ENCODE measurements at regions of chr1 and their contacts with region 1.

Region 1: DNA sequence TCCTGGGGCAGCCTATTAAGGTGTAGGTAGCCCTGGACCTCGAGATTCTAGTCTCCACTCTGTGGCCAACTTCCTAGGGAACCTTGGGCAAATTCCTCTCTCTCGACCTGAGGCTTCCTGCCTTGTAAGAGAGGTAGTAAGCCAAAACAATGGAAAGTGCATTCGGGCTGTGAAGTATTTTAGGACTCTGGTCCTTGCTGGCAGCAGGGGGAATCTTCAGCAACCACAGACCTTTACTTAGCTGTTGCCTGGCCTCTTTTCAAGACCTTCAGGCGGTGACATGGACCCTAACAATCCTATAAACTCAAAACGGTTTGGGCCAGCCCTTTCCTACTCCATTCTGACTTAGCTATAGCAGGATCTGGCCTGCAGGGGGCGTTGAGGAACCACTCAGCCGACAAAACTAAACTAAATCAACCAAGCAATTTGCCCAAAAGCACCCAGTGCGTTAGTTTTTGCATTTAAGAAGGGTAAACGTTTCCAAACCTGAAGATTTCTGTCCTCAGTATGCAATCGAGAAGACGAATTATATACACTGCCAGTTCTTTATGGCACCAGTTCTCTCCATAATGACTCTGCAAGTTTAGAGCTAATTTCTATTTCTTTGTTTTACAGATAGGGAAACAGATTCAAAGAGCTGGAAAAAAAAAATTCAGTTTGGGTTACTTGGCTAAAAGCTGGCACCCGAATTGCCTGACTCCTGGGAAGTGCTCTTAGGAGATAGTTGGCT is 10.9 kb upstream of the SESN2 start:
- DNase-seq: peak; percentile 91
- ATAC-seq: peak; percentile 16
- H3K4me3 Mint-ChIP-seq: peak overlapping the region; percentile 35
- H3K27ac Mint-ChIP-seq: peak overlapping the region; percentile 94
- H3K4me1 Mint-ChIP-seq: peaks cover 58% of the 10 kb centered on the region
- H3K27me3 Mint-ChIP-seq: no peaks in the 10 kb centered on the region

Region 2: GRCh38 chr1:27568300-27569087 is 680.0 kb before region 1 on chr1:
- CTCF ChIA-PET with region 1: no interaction called
- POLR2A ChIA-PET with region 1: no interaction called
- DNase-seq: peak; percentile 94
- ATAC-seq: peak; percentile 98
- H3K4me3 Mint-ChIP-seq: peak overlapping the region; percentile 64
- H3K27ac Mint-ChIP-seq: peak overlapping the region; percentile 46
- H3K4me1 Mint-ChIP-seq: peaks cover 29% of the 10 kb centered on the region
- H3K27me3 Mint-ChIP-seq: no peaks in the 10 kb centered on the region

Region 3: GRCh38 chr1:28088168-28088961 is 160.1 kb before region 1 on chr1 and contains the start of gene EYA3:
- CTCF ChIA-PET with region 1: interaction called, 14 read pairs
- POLR2A ChIA-PET with region 1: interaction called, 4 read pairs
- DNase-seq: peak; percentile 99
- ATAC-seq: peak; percentile 93
- H3K4me3 Mint-ChIP-seq: peak within 1 kb of the TSS; percentile 91
- H3K27ac Mint-ChIP-seq: peak within 1 kb of the TSS; percentile 96
- H3K4me1 Mint-ChIP-seq: peaks cover 38% of the 10 kb centered on the region
- H3K27me3 Mint-ChIP-seq: peaks cover 5% of the 10 kb centered on the region
- total RNA-seq, gene EYA3: 33.5 to 34.5 TPM

Region 4: GRCh38 chr1:28266920-28267322 is 18.5 kb after region 1 on chr1:
- CTCF ChIA-PET with region 1: interaction called, 125 read pairs
- POLR2A ChIA-PET with region 1: interaction called, 6 read pairs
- DNase-seq: no peak
- ATAC-seq: no peak
- H3K4me3 Mint-ChIP-seq: no peak overlapping the region
- H3K27ac Mint-ChIP-seq: no peak overlapping the region
- H3K4me1 Mint-ChIP-seq: peaks cover 2% of the 10 kb centered on the region
- H3K27me3 Mint-ChIP-seq: no peaks in the 10 kb centered on the region

Region 5: GRCh38 chr1:28329395-28330153 is 81.1 kb after region 1 on chr1:
- CTCF ChIA-PET with region 1: interaction called, 42 read pairs
- POLR2A ChIA-PET with region 1: interaction called, 52 read pairs
- DNase-seq: peak; percentile 66
- ATAC-seq: peak; percentile 21
- H3K4me3 Mint-ChIP-seq: peak overlapping the region; percentile 95
- H3K27ac Mint-ChIP-seq: peak overlapping the region; percentile 98
- H3K4me1 Mint-ChIP-seq: peaks cover 35% of the 10 kb centered on the region
- H3K27me3 Mint-ChIP-seq: no peaks in the 10 kb centered on the region

Region 6: DNA sequence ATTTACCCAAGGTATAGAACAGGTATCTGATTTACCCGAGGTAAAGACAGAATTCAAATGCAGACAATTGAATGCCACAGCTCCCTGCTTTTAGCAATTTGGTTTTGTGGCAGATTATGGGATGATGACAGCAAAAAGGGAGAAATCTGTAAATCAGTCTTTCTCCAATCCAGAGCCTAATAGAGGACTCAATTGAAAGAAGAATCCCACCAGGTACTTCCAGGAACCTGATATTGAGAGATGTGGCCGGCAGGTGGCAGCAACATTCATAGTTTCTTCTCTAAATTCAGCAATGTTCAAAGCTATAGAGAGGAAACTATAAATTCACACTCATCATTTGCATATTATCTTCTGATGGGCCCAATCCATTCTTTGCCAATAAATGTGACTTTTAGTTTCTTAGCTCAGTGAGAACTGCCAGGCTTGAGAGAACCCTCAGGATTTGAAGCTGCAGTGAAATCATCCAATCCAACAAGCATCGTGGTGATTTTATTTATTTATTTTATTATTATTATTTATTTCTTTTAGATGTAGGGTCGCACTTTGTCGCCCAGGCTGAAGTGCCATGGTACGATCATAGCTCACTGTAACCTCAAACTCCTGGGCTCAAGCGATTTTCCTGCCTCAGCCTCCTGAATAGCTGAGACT is 111.3 kb after region 1 on chr1:
- CTCF ChIA-PET with region 1: interaction called, 49 read pairs
- POLR2A ChIA-PET with region 1: no interaction called
- DNase-seq: peak; percentile 87
- ATAC-seq: peak; percentile 68
- H3K4me3 Mint-ChIP-seq: no peak overlapping the region
- H3K27ac Mint-ChIP-seq: no peak overlapping the region
- H3K4me1 Mint-ChIP-seq: peaks cover 10% of the 10 kb centered on the region
- H3K27me3 Mint-ChIP-seq: peaks cover 3% of the 10 kb centered on the region

Region 7: DNA sequence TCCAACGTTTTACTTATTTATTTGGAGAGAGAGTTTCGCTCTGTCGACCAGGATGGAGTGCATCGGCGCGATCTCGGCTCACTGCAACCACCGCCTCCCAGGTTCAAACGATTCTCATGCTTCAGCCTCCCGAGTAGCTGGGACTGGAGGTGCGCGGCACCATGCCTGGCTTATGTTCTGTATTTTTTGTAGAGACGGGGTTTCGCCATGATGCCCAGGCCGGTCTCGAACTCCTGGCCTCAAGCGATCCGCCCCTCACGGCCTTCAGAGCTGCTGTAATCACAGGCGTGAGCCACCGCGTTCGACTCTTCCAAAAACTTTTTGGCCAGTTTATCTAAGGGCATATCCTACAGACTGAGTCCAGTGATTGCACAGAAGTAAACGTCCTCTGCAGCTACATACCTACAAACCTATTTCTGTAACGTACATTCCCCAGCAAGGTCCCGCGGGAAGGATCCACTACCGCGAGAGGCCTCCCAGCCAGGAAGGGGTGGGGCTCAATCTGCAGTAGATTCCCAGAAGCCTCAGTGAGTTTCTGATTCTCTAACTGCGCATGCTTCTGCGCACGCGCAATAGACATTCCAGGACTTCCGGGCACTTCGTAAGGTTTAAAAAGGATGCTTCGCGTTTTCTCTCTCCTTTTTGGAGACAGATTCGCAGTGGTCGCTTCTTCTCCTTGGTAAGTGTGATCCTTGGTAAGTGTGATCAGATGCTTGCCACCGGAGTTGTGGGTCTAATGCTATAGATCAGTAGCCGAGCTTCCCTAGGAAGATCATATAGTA is 257.1 kb after region 1 on chr1 and contains the start of gene RCC1:
- CTCF ChIA-PET with region 1: interaction called, 19 read pairs
- POLR2A ChIA-PET with region 1: interaction called, 11 read pairs
- DNase-seq: peak; percentile 98
- ATAC-seq: peak; percentile 88
- H3K4me3 Mint-ChIP-seq: peak within 1 kb of the TSS; percentile 97
- H3K27ac Mint-ChIP-seq: peak within 1 kb of the TSS; percentile 97
- H3K4me1 Mint-ChIP-seq: peaks cover 28% of the 10 kb centered on the region
- H3K27me3 Mint-ChIP-seq: no peaks in the 10 kb centered on the region
- total RNA-seq, gene RCC1: 80.7 to 85.3 TPM

Measured in activated CD8-positive, alpha-beta T cell treated with anti-CD3 and anti-CD28 coated beads, Interleukin-2, amount 10 ng/mL, durations not matched to agents 7 days and 5 days (primary cell).